ENCODE measurements at regions of chr4 and their contacts with region 1.

Region 1: DNA sequence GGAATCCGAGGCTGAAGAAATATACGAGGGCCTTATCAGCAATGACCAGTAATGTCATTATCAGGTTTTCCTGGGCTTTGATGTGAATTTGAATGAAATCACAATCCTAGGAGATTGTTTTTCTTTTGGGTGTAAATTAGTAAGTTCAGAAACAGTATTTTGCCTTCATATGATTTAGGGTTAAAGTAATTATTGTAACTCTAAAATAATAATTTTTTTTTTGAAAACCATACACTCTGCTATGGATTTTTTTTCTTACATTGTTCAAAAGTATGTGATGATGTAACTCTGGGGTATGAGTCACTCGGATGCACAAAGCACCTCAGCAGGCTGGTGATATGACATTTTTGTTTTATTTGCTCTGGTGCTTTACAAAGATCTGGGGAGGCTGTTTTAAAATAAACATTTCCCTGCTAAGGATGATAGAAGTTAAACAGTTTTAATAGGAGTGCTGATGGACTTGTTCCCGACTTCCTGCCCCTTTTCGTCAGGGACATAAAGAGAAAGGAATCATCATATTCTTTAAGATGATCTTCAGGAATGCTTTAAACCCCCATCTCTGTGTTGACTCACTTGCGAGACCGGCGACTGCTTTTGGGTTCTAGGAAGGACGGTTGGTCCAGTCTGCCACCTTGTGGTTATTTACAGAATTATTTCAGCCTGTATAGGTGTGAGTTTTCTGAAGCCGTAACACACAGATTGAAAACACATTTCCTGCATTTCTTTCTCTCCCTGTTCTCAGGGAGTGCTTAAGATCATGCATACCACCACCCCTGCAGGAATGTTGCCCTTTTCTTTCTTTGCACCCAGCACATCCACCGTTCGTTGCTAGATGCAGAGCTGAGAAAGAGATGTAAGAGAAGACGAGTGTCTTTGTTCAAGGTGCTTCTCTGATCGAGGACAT is 72.5 kb downstream of the RAPGEF2 start:
- H3K4me3 Mint-ChIP-seq: no peak overlapping the region
- H3K27ac Mint-ChIP-seq: peak overlapping the region; percentile 20
- H3K4me1 Mint-ChIP-seq: peaks cover 53% of the 10 kb centered on the region
- H3K27me3 Mint-ChIP-seq: no peaks in the 10 kb centered on the region

Region 2: DNA sequence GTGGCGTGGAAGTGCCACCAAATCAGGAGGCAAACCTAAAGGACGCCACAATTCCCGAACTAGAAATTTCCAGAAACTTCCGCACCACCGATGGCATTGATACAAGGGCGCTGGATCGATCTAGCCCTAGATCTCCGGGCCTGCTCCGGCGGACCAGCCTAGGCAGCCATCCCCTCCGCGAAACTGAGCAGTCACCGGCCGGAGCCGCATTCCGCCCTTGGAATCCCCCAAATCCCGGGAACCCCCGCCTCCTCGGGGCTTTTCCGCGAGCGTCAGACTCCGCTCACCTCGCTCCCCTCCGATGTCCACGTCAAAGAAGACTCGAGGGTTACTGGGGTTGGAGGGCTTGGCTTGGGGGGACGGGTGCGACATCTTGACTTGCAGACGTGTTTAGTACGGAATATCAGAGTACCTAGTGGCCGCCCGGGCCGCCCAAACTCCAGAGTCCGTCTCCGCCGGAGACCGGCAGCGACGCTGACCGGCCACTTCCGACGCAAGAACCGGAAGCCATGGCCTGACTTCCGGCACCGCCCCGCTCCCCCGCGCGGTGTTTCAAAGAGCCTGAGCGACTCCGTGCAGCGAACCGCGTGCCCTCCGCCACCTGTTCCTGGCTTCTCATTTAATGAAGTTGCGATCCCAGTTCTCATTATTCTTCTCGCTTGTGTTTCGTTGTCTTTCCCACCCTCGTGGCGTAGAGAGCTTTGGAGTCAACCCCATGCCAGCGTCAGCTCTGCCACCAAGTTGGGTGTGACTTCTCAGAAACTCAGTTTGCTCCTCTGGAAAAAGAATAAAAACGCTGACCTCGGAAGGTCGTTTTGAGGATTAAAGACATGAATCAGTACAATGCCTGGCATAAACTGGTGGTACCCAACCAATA is 452.2 kb before region 1 on chr4 and contains the start of gene PPID:
- intact Hi-C with region 1: loop called (anchors 2 kb)
- H3K4me3 Mint-ChIP-seq: peak within 1 kb of the TSS; percentile 95
- H3K27ac Mint-ChIP-seq: peak within 1 kb of the TSS; percentile 99
- H3K4me1 Mint-ChIP-seq: peaks cover 25% of the 10 kb centered on the region
- H3K27me3 Mint-ChIP-seq: no peaks in the 10 kb centered on the region

Region 3: DNA sequence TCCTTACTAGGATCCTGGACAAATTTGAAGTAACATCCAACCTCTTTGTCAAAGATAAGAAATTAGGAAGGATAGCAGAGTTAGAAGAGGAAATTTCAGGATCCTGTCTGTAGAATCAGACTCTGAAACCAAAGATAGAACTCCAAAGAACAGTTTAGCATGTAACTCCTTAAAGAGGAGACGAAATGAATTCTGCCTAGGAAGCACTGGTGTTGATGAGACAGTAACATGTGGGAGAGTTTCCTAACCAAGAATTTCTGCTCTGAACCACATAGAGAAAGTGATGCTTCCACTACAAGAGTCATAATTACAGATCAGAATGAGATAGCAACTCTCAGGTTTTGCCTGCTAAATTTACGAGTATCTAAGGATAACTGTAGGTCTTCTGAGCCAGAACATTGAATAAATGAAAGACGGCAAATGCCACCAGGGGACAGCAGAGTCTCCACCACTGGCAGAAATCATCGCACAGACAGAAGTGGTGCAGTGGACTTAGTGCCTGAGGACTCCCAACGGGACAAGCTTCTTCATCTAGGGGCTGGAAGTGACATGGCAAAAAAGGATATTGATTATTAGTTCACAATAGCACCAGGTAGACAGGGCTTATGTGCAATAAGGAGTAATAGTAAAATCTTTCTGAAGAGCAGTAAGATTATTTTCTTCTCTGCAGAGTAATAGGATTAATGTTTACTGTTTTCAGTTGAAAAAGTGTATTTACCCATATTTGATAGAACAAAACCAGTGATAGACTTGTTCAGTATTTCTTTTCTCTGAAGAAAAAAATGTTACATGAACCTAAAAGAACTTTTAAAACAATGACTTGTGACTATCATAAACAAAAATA is 445.4 kb before region 1 on chr4:
- intact Hi-C with region 1: loop called (anchors 1 kb)
- H3K4me3 Mint-ChIP-seq: no peak overlapping the region
- H3K27ac Mint-ChIP-seq: no peak overlapping the region
- H3K4me1 Mint-ChIP-seq: no peaks in the 10 kb centered on the region
- H3K27me3 Mint-ChIP-seq: peaks cover 16% of the 10 kb centered on the region

Region 4: GRCh38 chr4:158856852-158857251 is 318.5 kb before region 1 on chr4:
- intact Hi-C with region 1: loop called (anchors 1 kb)
- H3K4me3 Mint-ChIP-seq: no peak overlapping the region
- H3K27ac Mint-ChIP-seq: no peak overlapping the region
- H3K4me1 Mint-ChIP-seq: no peaks in the 10 kb centered on the region
- H3K27me3 Mint-ChIP-seq: no peaks in the 10 kb centered on the region

Region 5: GRCh38 chr4:158895797-158896576 is 279.4 kb before region 1 on chr4:
- intact Hi-C with region 1: loop called (anchors 10 kb)
- H3K4me3 Mint-ChIP-seq: no peak overlapping the region
- H3K27ac Mint-ChIP-seq: peak overlapping the region; percentile 45
- H3K4me1 Mint-ChIP-seq: peaks cover 31% of the 10 kb centered on the region
- H3K27me3 Mint-ChIP-seq: no peaks in the 10 kb centered on the region

Region 6: DNA sequence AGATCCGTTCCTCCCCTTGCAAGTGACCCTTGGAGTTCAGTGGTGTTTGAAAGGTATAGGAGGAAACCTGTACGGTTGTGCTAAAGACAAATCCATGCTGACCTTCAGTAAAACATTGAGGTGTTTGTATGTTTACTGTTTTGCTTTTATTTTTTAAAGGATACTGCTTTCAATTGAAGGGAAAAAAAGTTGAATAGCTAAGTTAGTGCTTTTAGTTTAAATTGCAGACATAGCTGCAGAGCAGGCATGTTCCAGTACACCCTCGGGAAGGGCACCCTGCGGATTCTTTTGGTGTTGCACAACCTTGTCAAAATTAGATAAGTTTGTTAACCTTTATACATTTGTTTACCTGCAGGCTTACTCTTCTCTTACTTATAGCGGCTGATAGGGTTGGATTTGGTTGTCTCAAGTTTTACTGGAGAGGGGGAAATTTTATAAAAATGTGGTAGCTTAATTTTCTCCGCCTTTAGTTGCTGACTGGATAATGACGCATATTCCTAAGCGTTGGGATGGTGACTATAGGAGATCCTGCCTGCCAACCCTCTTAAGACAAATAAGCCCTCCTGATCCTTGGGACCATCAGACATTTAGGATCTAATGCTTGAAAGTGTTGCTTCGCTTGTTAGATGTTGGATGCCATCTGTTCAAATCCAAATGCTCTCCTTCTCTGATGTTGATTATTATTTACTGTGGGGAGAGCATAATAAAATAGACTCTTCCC is 70.5 kb before region 1 on chr4:
- intact Hi-C with region 1: loop called (anchors 2 kb)
- H3K4me3 Mint-ChIP-seq: peak overlapping the region; percentile 87
- H3K27ac Mint-ChIP-seq: peak overlapping the region; percentile 93
- H3K4me1 Mint-ChIP-seq: peaks cover 52% of the 10 kb centered on the region
- H3K27me3 Mint-ChIP-seq: peaks cover 21% of the 10 kb centered on the region

Region 7: DNA sequence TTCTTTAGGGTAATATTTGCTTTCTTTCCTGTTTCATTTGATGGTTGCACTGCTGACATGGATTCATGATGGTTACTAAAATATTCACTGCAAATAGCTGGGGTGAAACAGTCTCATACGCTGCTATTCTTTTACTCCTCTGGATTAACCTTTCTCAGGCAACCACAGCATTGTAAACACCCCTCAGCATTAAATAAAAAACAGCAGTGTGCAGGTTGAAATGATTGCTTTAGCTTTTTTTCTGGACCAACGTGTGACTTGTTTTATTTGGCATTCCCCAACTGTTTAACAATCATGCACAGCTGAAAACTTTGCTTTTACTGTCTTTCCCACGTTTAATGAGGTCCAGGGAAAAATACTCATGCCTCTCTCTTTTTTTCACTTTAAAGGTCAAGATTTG is 418.3 kb after region 1 on chr4:
- intact Hi-C with region 1: no loop called
- H3K4me3 Mint-ChIP-seq: no peak overlapping the region
- H3K27ac Mint-ChIP-seq: no peak overlapping the region
- H3K4me1 Mint-ChIP-seq: no peaks in the 10 kb centered on the region
- H3K27me3 Mint-ChIP-seq: no peaks in the 10 kb centered on the region